ENCODE measurements at regions of chr17 and their contacts with region 1.

Region 1: GRCh38 chr17:62692721-62693483 is 65.4 kb downstream of the MRC2 start:
- DNase-seq: no peak
- H3K4me3 ChIP-seq: no peak overlapping the region
- H3K27ac ChIP-seq: no peak overlapping the region
- H3K4me1 ChIP-seq: peaks cover 18% of the 10 kb centered on the region
- H3K27me3 ChIP-seq: no peaks in the 10 kb centered on the region
- CTCF ChIP-seq: peak; percentile 30 to 65
- POLR2A ChIP-seq: no peak

Region 2: GRCh38 chr17:62456016-62456415 is 236.9 kb before region 1 on chr17:
- CTCF ChIA-PET with region 1: no interaction called
- POLR2A ChIA-PET with region 1: no interaction called
- dilution Hi-C with region 1: no loop called
- intact Hi-C with region 1: no loop called
- DNase-seq: no peak
- H3K4me3 ChIP-seq: no peak overlapping the region
- H3K27ac ChIP-seq: no peak overlapping the region
- H3K4me1 ChIP-seq: no peaks in the 10 kb centered on the region
- H3K27me3 ChIP-seq: no peaks in the 10 kb centered on the region
- CTCF ChIP-seq: no peak
- POLR2A ChIP-seq: no peak

Region 3: DNA sequence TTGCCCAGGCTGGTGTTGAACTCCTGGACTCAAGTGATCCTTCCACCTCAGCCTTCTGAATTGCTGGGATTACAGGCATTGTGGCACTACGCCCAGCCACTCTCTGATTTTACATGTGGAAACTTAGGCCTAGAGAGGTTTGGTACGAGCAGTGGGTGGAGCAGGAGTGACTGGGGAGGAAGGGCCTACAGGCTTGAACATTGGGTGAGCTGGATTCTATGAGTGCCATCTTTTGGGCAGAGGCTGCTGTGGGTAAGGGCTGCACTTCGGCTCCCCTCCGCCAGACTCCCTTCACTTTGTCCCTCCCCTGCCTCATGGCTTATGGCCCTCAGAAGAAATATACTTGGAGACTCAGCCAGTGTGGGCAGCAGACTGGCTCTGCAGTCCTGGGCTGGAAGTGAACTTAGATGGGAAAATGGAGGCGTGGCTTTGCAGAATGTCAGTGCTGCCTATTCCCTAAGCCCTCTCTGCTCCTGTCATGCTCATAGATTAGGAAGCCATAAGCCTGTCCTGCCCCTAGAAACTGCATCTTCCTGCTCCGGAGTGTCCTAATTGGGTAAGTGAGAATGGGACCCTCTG is 74.9 kb before region 1 on chr17:
- CTCF ChIA-PET with region 1: no interaction called
- POLR2A ChIA-PET with region 1: no interaction called
- dilution Hi-C with region 1: no loop called
- intact Hi-C with region 1: loop called (anchors 1 kb)
- DNase-seq: no peak
- H3K4me3 ChIP-seq: no peak overlapping the region
- H3K27ac ChIP-seq: no peak overlapping the region
- H3K4me1 ChIP-seq: no peaks in the 10 kb centered on the region
- H3K27me3 ChIP-seq: no peaks in the 10 kb centered on the region
- CTCF ChIP-seq: no peak
- POLR2A ChIP-seq: no peak

Region 4: DNA sequence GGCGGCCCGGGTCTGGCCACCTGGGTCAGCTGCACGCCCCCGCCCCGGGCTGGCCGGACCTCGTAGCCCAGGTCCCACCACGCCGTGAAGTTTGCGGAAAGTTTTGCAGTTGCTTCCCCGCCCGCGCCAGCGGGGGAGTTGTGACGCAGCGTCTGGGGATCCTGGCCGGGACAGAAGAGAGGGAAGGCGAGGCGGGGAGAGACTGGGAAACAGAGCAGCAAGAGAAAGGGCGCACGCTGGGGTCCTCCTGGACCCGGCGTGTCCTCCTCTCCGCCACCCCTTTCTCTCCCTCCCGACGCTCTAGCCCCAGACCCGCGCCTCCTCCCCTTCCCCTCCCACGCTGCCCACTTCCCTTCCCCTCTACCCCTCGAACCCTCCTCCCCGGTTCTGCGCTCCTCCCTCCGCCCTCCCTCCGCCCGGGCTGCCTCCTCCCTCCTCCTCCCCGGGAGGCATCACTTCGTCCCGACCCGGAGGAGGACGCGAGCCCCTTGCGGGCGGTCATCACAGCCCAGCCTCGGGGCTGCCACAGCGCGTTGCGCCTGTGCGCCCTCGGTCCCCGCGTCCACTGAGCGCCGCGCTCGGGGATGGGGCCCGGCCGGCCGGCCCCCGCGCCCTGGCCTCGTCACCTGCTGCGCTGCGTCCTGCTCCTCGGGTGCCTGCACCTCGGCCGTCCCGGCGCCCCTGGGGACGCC is 65.5 kb before region 1 on chr17 and contains the start of gene MRC2:
- CTCF ChIA-PET with region 1: no interaction called
- POLR2A ChIA-PET with region 1: no interaction called
- dilution Hi-C with region 1: no loop called
- intact Hi-C with region 1: loop called (anchors 2 kb)
- DNase-seq: peak; percentile 68
- H3K4me3 ChIP-seq: peak within 1 kb of the TSS; percentile 33 to 63 (median 51)
- H3K27ac ChIP-seq: peak within 1 kb of the TSS; percentile 50
- H3K4me1 ChIP-seq: peaks cover 6% of the 10 kb centered on the region
- H3K27me3 ChIP-seq: no peaks in the 10 kb centered on the region
- CTCF ChIP-seq: peak in 1 of 2 donors; percentile 20
- POLR2A ChIP-seq: peak; percentile 50
- total RNA-seq, gene MRC2: 52.7 and 52.9 TPM in 2 replicates

Region 5: GRCh38 chr17:62644487-62645173 is 48.3 kb before region 1 on chr17:
- CTCF ChIA-PET with region 1: no interaction called
- POLR2A ChIA-PET with region 1: no interaction called
- dilution Hi-C with region 1: no loop called
- intact Hi-C with region 1: no loop called
- DNase-seq: no peak
- H3K4me3 ChIP-seq: no peak overlapping the region
- H3K27ac ChIP-seq: no peak overlapping the region
- H3K4me1 ChIP-seq: no peaks in the 10 kb centered on the region
- H3K27me3 ChIP-seq: no peaks in the 10 kb centered on the region
- CTCF ChIP-seq: no peak
- POLR2A ChIP-seq: no peak

Region 6: GRCh38 chr17:62703775-62704378 is 11.0 kb after region 1 on chr17:
- CTCF ChIA-PET with region 1: no interaction called
- POLR2A ChIA-PET with region 1: no interaction called
- dilution Hi-C with region 1: no loop called
- intact Hi-C with region 1: loop called (anchors 1 kb)
- DNase-seq: peak; percentile 44
- H3K4me3 ChIP-seq: peak overlapping the region; percentile 23 to 56 (median 48)
- H3K27ac ChIP-seq: peak overlapping the region; percentile 14
- H3K4me1 ChIP-seq: peaks cover 32% of the 10 kb centered on the region
- H3K27me3 ChIP-seq: peaks cover 0 to 8% of the 10 kb centered on the region in 2 experiments
- CTCF ChIP-seq: peak; percentile 79 to 87
- POLR2A ChIP-seq: no peak

Region 7: DNA sequence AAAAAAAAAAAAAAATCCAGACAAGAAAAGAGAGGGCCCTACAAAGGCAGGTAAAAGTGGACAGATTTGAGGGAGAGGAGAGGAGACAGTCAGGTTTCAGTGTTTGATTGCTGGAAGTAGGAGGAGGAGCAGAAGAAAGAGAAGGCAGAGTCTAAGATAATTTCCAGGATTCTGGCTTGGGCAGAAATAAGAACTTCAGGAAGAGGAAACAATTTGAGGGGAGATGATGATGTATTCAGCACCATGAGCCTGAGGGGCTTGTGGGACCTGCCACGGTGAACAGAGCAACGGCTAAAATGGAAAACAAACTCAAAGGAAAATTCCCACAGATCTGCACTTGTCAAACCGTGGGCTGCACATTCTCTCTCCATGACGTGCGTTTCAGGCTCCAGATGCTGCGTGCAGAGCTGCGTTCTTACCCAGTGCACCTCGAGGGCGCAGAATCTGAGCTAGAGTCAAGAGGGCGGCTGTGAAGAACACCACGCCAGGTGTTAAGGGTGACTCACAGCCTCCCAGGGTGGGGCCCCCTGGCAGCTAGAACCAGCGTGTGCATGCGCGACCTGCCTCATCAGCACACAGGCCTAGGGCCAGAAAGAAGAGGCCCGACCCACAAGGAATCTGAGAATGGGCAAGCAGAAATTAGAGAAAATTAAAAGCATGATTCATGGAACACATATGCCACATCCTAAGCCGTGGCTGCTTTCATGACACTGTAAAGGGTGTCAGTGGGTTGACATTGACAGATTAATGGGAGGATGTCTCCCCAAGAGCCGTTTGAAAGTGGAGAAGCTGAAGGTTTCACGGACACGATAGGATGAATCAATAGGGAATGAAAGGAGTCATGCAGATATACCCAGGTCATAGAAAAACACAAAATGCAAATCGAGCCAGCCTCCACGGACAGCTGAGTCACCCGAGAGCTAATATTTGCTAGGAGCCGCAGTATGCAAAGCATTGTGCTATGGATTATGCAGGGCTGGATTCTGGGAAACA is 86.1 kb after region 1 on chr17:
- CTCF ChIA-PET with region 1: no interaction called
- POLR2A ChIA-PET with region 1: no interaction called
- dilution Hi-C with region 1: no loop called
- intact Hi-C with region 1: no loop called
- DNase-seq: no peak
- H3K4me3 ChIP-seq: no peak overlapping the region
- H3K27ac ChIP-seq: no peak overlapping the region
- H3K4me1 ChIP-seq: no peaks in the 10 kb centered on the region
- H3K27me3 ChIP-seq: peaks cover 0 to 2% of the 10 kb centered on the region in 2 experiments
- CTCF ChIP-seq: no peak
- POLR2A ChIP-seq: no peak

Region 8: DNA sequence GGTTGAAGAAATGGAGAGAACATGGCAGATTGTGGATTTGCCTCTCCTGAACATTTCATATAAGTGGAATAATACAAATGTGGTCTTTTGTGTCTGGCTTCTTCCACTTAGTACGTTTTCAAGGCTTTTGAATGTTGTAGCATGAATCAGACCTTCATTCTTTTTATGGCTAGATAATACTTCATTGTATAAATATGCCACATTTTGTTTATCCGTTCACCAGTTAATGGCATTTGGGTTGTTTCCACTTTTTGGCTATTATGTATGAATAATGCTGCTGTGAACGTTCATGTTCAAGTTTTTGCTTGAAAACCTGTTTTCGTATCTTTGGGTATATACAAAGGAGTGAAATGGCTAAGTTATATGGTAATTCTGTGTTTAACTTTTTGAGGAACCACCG is 403.5 kb after region 1 on chr17:
- CTCF ChIA-PET with region 1: no interaction called
- POLR2A ChIA-PET with region 1: no interaction called
- dilution Hi-C with region 1: no loop called
- intact Hi-C with region 1: no loop called
- DNase-seq: no peak
- H3K4me3 ChIP-seq: no peak overlapping the region
- H3K27ac ChIP-seq: no peak overlapping the region
- H3K4me1 ChIP-seq: no peaks in the 10 kb centered on the region
- H3K27me3 ChIP-seq: no peaks in the 10 kb centered on the region
- CTCF ChIP-seq: no peak
- POLR2A ChIP-seq: no peak